Activated naive CD4-positive, alpha-beta T cell treated with anti-CD3 and anti-CD28 coated beads, Interleukin-2, amount 10 ng/mL, durations not matched to agents 7 days and 5 days (primary cell): ENCODE measurements at regions of chr11 and their contacts with region 1.

Region 1: GRCh38 chr11:18540207-18541009 is 13.7 kb upstream of the TSG101 start:
- DNase-seq: no peak
- H3K4me3 Mint-ChIP-seq: no peak overlapping the region
- H3K27ac Mint-ChIP-seq: no peak overlapping the region
- H3K4me1 Mint-ChIP-seq: no peaks in the 10 kb centered on the region
- H3K27me3 Mint-ChIP-seq: no peaks in the 10 kb centered on the region

Region 2: DNA sequence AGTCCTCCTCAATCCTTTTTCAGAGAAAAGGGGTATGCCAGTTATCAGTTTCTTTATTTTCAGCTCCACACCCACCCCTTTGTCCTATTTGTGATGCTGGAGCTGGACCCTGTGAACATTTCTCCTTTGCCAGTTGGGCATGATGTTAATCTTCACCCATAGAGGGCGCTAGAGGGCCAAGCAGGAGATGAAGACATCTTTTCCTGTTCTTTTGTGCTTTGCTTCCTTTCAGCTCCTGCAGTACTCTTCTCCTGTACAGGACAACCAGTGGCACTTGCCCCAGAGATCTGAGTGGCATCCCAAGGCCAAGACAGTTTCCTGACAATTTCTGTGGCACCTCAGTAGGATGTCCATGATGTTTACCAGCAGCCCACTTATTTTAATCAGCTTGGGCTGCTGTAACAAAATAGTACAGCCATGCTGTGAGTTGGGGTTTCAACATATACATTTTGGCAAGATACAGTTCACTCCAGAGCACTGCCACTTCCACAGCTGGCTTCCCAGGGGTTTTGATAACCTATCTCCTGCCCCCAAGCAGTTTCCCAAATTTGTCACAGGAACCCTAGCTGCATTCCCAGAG is 296.5 kb before region 1 on chr11:
- CTCF ChIA-PET with region 1: interaction called, 14 read pairs
- DNase-seq: peak; percentile 81
- H3K4me3 Mint-ChIP-seq: no peak overlapping the region
- H3K27ac Mint-ChIP-seq: peak overlapping the region; percentile 58
- H3K4me1 Mint-ChIP-seq: peaks cover 32% of the 10 kb centered on the region
- H3K27me3 Mint-ChIP-seq: peaks cover 23% of the 10 kb centered on the region

Region 3: DNA sequence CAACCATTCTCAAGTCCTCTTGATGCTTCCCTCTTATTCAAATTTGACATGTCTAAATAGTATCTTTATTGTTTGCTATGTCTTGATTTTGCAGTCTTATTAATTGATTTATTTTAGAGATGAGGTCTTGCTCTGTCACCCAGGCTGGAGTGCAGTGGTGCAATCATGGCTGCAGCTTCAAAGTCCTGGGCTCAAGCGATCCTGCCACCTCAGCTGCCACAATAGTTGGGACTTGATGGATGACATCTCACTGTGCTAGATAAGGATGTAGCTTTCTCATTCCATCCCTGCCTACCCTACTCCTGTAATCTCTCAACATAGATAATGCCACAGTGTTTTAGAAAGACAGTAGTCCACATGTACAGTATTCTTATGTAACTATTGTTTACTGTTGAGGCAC is 101.3 kb after region 1 on chr11:
- CTCF ChIA-PET with region 1: interaction called, 11 read pairs
- DNase-seq: no peak
- H3K4me3 Mint-ChIP-seq: no peak overlapping the region
- H3K27ac Mint-ChIP-seq: no peak overlapping the region
- H3K4me1 Mint-ChIP-seq: no peaks in the 10 kb centered on the region
- H3K27me3 Mint-ChIP-seq: peaks cover 18% of the 10 kb centered on the region

Region 4: GRCh38 chr11:18721561-18722292 is 181.3 kb after region 1 on chr11:
- CTCF ChIA-PET with region 1: interaction called, 23 read pairs
- DNase-seq: peak; percentile 66
- H3K4me3 Mint-ChIP-seq: peak overlapping the region; percentile 67
- H3K27ac Mint-ChIP-seq: no peak overlapping the region
- H3K4me1 Mint-ChIP-seq: peaks cover 8% of the 10 kb centered on the region
- H3K27me3 Mint-ChIP-seq: peaks cover 62% of the 10 kb centered on the region

Region 5: DNA sequence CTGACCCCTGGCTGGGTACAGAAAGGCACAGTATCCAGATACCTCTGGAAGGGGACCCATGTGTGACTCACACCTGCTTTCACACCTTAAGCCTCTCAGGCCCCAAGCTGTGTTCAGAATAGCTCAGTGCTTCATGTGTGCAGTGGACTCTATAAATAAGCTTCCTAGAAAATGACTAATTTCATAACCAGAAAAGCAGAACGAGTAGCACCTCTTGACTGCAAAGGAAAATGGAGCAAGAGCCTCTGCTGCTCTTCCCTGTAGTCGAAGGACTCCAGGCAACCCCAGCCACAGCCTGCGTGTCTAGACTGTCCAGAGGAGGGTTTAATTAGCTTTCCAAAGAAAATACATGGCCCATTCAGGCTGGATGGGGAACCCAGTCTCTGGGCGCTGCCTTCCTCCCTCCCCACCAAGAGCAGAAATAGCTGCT is 228.1 kb after region 1 on chr11:
- CTCF ChIA-PET with region 1: interaction called, 16 read pairs
- DNase-seq: no peak
- H3K4me3 Mint-ChIP-seq: no peak overlapping the region
- H3K27ac Mint-ChIP-seq: peak overlapping the region; percentile 15
- H3K4me1 Mint-ChIP-seq: peaks cover 16% of the 10 kb centered on the region
- H3K27me3 Mint-ChIP-seq: peaks cover 37% of the 10 kb centered on the region

Region 6: GRCh38 chr11:18780329-18780728 is 239.9 kb after region 1 on chr11:
- CTCF ChIA-PET with region 1: no interaction called
- DNase-seq: no peak
- H3K4me3 Mint-ChIP-seq: no peak overlapping the region
- H3K27ac Mint-ChIP-seq: no peak overlapping the region
- H3K4me1 Mint-ChIP-seq: peaks cover 21% of the 10 kb centered on the region
- H3K27me3 Mint-ChIP-seq: peaks cover 8% of the 10 kb centered on the region